CD8-positive, alpha-beta T cell (primary cell): ENCODE measurements at regions of chr2 and their contacts with region 1.

Region 1: DNA sequence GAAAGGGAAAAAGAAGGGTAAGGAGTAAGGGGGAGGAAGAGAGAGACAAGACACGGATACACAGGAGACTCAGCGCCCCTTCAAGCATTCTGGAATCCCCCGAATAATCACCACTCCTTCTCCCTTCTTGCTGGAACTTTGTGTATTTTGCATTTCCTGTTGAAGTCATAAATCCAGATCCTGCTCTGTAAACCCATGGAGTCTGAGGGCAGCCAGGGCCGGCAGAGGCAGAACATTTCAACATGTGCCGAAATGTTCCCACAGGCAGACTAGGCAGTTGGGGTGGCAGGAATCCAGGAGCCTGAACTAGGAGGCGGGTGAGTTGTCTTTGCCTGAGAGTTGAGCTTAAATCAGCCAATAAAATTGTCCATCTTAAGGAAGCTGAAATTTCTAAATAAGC is 193.1 kb downstream of the SH3RF3 start:
- DNase-seq: no peak
- ATAC-seq: no peak
- H3K4me3 ChIP-seq: no peak overlapping the region
- H3K4me3 Mint-ChIP-seq: no peak overlapping the region
- H3K27ac ChIP-seq: no peak overlapping the region
- H3K27ac Mint-ChIP-seq: peak overlapping the region; percentile 46
- H3K4me1 ChIP-seq: peaks cover 20% of the 10 kb centered on the region
- H3K4me1 Mint-ChIP-seq: peaks cover 43% of the 10 kb centered on the region
- H3K27me3 ChIP-seq: no peaks in the 10 kb centered on the region
- H3K27me3 Mint-ChIP-seq: no peaks in the 10 kb centered on the region
- CTCF ChIP-seq: no peak

Region 2: GRCh38 chr2:109352898-109353689 is 31.0 kb after region 1 on chr2:
- CTCF ChIA-PET with region 1: no interaction called
- POLR2A ChIA-PET with region 1: no interaction called
- intact Hi-C with region 1: no loop called
- DNase-seq: peak in 1 of 9 experiments; percentile 42
- ATAC-seq: no peak
- H3K4me3 ChIP-seq: no peak overlapping the region
- H3K4me3 Mint-ChIP-seq: no peak overlapping the region
- H3K27ac ChIP-seq: no peak overlapping the region
- H3K27ac Mint-ChIP-seq: no peak overlapping the region
- H3K4me1 ChIP-seq: peaks cover 35% of the 10 kb centered on the region
- H3K4me1 Mint-ChIP-seq: peaks cover 40% of the 10 kb centered on the region
- H3K27me3 ChIP-seq: no peaks in the 10 kb centered on the region
- H3K27me3 Mint-ChIP-seq: no peaks in the 10 kb centered on the region
- CTCF ChIP-seq: no peak

Region 3: GRCh38 chr2:109497463-109497862 is 175.4 kb after region 1 on chr2:
- CTCF ChIA-PET with region 1: no interaction called
- POLR2A ChIA-PET with region 1: no interaction called
- intact Hi-C with region 1: loop called in 1 of 2 experiments (anchors 10 kb)
- DNase-seq: no peak
- ATAC-seq: no peak
- H3K4me3 ChIP-seq: no peak overlapping the region
- H3K4me3 Mint-ChIP-seq: no peak overlapping the region
- H3K27ac ChIP-seq: no peak overlapping the region
- H3K27ac Mint-ChIP-seq: no peak overlapping the region
- H3K4me1 ChIP-seq: no peaks in the 10 kb centered on the region
- H3K4me1 Mint-ChIP-seq: no peaks in the 10 kb centered on the region
- H3K27me3 ChIP-seq: no peaks in the 10 kb centered on the region
- H3K27me3 Mint-ChIP-seq: no peaks in the 10 kb centered on the region
- CTCF ChIP-seq: no peak